ENCODE measurements at regions of chr16 and their contacts with region 1.

Region 1: DNA sequence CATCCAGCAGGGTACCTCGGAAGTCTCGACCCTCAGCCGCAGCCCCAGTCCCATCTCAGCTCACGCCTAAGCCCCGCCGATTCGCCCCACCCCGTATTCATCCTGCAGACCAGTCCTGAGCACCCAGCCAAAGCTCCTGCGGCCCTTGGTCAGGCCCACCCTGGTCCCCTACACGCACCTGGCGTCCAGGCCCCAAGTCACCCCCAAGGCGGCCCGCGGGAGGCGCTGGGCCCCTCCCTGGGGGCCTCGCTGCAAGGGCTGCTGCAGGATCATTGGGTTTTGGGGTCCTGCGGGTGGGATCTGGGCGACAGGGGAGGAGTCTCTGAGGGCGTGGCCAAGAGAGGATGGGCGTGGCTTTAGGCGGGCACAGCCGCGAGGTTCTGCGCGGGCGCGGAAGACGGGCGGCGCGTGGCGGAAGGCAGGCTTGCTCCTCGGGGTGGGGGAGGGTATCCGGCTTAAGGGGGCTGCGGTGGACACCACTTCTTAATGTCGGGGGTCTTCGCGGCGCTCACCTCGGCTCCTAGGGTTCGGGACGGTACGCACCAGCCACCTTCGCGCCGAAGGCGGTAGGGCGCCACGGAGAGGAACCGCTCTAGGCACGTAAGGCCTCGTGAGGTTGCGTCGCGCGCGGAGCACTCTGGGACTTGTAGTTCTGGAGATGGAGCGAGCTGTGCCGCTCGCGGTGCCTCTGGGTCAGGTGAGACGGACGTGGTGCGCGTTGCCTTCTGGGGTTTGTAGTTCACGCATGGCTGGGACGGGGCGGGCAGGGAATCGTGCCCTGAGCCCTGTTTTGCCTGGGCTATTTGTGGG is at the starts of genes HCFC1R1 and THOC6:
- DNase-seq: peak; percentile 99
- ATAC-seq: peak; percentile 74
- H3K4me3 Mint-ChIP-seq: peak within 1 kb of the TSS; percentile 74
- H3K27ac Mint-ChIP-seq: peak within 1 kb of the TSS; percentile 97
- H3K4me1 Mint-ChIP-seq: peaks cover 50% of the 10 kb centered on the region
- H3K27me3 Mint-ChIP-seq: peaks cover 4% of the 10 kb centered on the region
- total RNA-seq, gene HCFC1R1: 30.0 to 30.7 TPM
- total RNA-seq, gene THOC6: 46.9 to 50.2 TPM

Region 2: DNA sequence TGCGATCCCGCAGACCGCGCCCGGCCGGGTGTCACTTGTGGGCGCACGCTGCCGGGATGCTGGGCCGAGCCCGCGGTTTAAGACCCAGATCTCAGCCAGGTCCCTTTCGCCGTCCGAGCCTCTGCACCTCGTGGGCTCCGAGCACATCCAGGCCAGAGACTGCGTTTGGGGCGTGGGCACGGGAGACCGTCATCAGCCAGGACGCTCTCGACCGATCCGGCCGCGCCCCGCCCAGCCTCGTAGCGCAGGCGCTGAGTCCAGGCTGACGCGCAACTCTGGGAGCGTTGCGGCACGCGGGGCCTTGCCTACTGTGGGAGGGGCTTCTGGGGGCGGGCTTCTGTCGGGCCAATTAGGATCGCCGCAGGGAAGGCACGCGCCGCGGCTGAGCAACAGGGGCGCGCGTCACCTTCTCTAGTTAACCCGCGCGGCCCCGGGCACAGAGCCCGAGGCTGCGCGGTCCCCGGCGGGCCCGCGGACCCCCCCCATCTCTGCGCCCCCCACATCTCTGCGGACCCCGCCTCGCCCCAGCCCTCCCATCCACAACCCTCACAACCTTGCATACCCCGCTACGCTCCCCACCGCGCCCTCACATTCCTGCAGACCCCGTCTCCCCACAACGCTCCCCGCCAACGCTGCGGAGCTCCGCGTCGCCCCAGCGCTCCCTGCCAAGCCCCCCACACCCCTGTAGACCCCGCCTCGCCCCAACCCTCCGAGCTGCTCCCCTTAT is 491.9 kb before region 1 on chr16:
- CTCF ChIA-PET with region 1: no interaction called
- POLR2A ChIA-PET with region 1: no interaction called
- intact Hi-C with region 1: loop called in 1 of 2 experiments (anchors 5 kb)
- DNase-seq: peak; percentile 99
- ATAC-seq: peak; percentile 94
- H3K4me3 Mint-ChIP-seq: peak overlapping the region; percentile 82
- H3K27ac Mint-ChIP-seq: peak overlapping the region; percentile 97
- H3K4me1 Mint-ChIP-seq: peaks cover 17% of the 10 kb centered on the region
- H3K27me3 Mint-ChIP-seq: no peaks in the 10 kb centered on the region

Region 3: DNA sequence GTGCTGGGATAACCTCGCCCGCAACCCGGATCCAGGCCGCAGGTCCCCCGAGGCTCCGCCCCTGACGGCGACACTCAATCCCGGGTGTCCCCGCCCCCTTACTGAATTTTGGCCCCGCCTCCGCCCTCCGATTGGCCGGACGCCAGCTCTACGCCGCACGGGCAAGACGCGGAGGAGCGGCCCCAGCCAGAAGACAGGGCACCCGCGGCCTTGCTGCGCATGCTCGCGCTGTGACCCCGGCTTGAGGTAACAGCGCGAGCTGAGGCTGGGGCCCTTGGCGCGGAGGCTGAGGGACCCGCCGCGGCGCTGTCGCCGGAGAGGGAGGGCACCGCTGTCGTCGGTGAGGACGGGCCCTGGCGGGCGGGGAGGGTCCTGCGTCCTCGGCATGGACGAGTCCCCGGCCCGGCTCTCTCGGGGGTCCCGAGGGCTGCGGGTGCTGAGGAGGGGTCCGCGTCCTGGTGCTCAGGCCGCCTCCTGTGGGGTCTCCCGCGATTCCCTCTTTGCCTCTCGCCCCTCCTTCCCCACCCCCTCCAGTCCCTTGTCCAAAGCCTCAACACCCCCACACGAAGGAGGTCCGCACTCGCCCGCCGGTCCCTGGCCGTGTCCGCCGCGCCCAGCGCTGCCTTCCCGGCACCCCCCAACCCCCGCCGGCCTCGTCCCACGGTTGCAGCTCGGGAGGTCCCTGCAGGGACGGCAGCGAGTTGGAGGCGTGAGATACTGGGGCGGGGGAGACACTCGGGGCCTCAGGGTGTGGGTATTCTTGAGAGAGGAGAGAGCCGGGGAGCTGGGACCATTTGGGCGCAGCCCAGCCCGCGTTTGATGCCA is 140.6 kb before region 1 on chr16 and contains the start of gene FLYWCH2:
- CTCF ChIA-PET with region 1: no interaction called
- POLR2A ChIA-PET with region 1: no interaction called
- intact Hi-C with region 1: loop called in 1 of 2 experiments (anchors 2 kb)
- DNase-seq: peak; percentile 99
- ATAC-seq: peak; percentile 84
- H3K4me3 Mint-ChIP-seq: peak within 1 kb of the TSS; percentile 85
- H3K27ac Mint-ChIP-seq: peak within 1 kb of the TSS; percentile 92
- H3K4me1 Mint-ChIP-seq: peaks cover 10% of the 10 kb centered on the region
- H3K27me3 Mint-ChIP-seq: no peaks in the 10 kb centered on the region
- total RNA-seq, gene FLYWCH2: 16.8 to 17.3 TPM

Region 4: DNA sequence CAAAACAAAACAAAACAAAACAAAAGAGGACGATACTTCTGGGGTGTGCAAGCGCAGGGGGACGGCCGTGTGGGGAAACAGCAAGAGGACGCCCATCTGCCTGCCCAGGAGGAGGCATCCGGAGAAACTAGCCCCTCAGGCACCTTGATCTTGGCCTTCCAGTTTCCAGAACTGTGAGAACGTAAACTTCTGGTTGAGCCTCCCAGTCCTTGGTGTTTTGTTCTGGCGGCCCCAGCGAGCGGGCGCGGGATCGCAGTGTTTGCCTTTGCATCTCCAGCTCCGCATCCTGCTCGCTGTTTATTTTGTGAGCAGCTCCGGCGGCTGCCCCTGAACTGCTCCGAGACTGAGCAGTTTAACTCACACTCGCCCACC is 21.5 kb after region 1 on chr16:
- CTCF ChIA-PET with region 1: interaction called, 61 read pairs
- POLR2A ChIA-PET with region 1: no interaction called
- intact Hi-C with region 1: no loop called
- DNase-seq: peak; percentile 64
- ATAC-seq: peak; percentile 59
- H3K4me3 Mint-ChIP-seq: peak overlapping the region; percentile 63
- H3K27ac Mint-ChIP-seq: no peak overlapping the region
- H3K4me1 Mint-ChIP-seq: peaks cover 14% of the 10 kb centered on the region
- H3K27me3 Mint-ChIP-seq: peaks cover 43% of the 10 kb centered on the region

Region 5: DNA sequence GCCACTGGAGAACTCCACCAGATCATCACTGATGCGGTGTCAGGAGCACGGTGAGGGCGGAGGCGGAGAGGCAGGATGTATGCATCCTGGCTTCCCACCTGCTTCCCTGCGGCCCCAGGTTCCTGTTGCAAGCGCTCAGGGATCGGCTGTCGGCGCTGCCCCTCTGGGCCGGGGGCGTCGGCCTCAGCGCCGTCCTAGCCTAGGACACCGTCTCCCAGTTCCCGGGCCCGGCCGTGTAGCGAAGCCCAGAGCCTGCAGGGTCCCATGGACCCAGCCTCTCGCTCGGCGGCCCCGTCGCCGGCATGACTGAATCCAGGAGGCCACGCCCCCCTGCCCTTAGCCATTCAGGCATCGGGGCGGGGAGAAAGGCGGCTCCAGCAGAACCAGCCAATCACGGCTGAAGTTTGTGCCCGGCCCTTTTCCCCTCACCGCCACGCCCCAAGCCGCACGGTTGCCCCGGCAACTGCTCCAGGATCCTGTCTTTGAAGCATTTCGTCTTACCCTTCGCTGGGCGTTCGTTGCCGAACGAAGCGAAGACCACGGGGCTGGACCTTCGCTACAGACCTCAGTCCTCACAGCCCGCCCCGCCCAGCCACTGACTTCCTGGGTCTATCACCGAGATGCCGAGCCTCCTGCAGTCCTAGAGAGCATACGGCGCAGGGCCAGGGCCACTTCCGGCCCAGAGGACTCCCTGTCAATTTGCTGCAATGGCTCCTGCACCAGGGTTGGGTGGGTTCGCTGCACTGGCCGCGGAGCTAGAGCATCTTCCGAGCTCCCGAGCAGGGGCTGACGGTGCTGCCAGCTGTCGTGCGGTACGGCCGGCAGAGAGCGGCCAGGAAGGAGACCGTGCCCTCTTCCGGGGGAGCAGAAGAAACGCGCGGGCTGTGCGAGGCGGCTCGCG is 100.4 kb after region 1 on chr16:
- CTCF ChIA-PET with region 1: interaction called, 104 read pairs
- POLR2A ChIA-PET with region 1: no interaction called
- intact Hi-C with region 1: loop called in 1 of 2 experiments (anchors 1 kb)
- DNase-seq: peak; percentile 99
- ATAC-seq: peak; percentile 92
- H3K4me3 Mint-ChIP-seq: peak overlapping the region; percentile 90
- H3K27ac Mint-ChIP-seq: peak overlapping the region; percentile 90
- H3K4me1 Mint-ChIP-seq: peaks cover 30% of the 10 kb centered on the region
- H3K27me3 Mint-ChIP-seq: no peaks in the 10 kb centered on the region

Region 6: DNA sequence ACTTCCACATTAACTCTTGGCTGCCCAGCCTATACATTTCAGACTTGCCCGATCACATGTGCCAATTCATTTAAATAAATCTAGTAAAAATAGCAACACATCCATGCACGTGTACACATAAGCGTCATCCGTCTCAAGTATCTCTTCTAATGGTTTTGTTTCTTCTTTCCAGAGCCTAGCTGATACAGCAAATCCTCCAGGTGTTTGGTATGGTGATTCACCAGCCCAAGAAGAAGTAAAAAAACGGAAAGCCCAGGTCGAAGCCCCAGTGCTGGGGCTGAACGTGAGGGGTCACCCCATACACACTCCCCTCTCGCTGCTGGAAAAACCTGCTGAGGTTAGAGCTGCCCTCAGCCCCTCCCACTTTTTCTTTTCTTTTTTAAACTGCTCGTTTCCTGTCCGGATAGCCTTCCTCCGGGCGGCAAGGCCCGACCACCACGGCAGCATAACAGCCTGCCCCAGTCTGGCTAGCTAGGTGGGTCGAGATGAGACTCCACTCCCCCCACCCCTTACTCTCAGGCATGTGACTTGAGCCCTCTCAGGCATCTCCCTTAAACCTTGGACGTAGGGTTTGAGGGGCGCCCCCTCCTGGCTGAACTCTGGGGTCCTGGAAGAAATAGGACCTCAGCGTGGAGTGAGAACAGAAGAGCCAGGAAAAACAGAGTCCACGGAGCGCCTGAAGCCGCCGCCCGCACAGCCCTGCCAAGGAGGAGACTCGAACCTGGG is 150.2 kb after region 1 on chr16:
- CTCF ChIA-PET with region 1: interaction called, 12 read pairs
- POLR2A ChIA-PET with region 1: no interaction called
- intact Hi-C with region 1: no loop called
- DNase-seq: peak; percentile 61
- ATAC-seq: peak; percentile 10
- H3K4me3 Mint-ChIP-seq: peak overlapping the region; percentile 47
- H3K27ac Mint-ChIP-seq: peak overlapping the region; percentile 26
- H3K4me1 Mint-ChIP-seq: peaks cover 37% of the 10 kb centered on the region
- H3K27me3 Mint-ChIP-seq: peaks cover 51% of the 10 kb centered on the region

Region 7: DNA sequence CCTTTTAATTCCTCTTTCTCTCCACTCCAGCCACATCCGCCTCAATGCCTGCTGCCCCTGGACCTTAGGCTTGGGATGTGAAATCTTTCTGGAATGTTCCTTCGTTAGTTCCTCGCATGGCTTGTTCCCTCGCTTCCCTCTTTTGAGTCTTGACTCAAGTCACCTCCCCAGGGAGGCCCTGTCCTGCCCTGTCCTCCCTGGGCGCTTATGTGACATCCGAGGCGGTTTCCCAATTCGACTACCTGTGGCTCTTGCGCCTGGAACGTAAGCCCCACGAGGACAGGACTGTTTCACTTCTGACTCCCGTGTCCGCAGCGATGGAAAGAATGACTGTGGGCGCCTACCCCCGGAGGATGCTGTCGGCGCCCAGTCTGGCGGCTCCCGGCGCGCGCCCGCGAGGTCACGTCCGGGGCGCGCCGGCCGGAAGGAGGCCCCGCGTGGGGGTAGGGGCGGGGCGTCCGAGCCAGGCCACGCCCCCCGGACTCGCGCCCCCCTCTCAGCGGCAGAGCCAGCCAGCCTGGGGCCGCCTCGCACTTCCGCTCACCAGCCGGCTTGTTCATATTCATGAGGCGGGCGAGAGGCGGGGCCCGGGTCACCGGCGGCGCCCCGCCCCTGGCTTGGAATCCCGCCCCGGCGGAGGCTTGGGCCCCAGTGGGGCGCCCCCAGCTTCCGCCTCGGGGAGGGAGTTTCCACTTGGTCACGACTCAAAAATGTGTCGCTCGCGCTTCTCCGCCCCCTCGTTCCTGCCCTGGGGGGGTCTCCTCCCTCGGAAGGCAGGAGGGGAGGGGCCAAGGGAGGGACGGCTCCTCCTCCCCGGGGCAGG is 1283.6 kb after region 1 on chr16:
- CTCF ChIA-PET with region 1: no interaction called
- POLR2A ChIA-PET with region 1: no interaction called
- intact Hi-C with region 1: loop called in 1 of 2 experiments (anchors 5 kb)
- DNase-seq: peak; percentile 98
- ATAC-seq: peak; percentile 92
- H3K4me3 Mint-ChIP-seq: peak overlapping the region; percentile 96
- H3K27ac Mint-ChIP-seq: peak overlapping the region; percentile 99
- H3K4me1 Mint-ChIP-seq: peaks cover 30% of the 10 kb centered on the region
- H3K27me3 Mint-ChIP-seq: no peaks in the 10 kb centered on the region